Right ventricle myocardium superior (tissue), 1 donor: ENCODE measurements at regions of chr6 and their contacts with region 1.

Region 1: DNA sequence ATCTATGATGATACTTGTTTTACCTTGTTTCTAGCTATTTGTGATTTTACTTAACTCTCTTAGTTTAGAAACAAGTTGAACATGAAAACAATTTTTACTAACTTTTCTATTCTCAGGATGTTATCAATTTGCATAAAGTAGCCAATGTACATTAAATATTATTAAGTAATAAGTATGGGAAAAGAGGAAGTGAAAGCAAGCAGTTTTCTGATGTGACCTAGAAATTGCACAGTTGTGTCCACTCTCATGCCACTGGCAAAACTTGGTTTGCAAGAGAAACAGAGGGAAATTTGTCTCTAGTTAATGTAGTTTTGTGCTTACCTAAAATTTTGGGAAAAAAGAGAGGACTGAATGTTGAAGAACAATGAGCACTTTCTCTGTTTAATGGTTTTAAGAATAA is 19.2 kb upstream of the TSPYL1 start:
- DNase-seq: no peak
- ATAC-seq: no peak

Region 2: DNA sequence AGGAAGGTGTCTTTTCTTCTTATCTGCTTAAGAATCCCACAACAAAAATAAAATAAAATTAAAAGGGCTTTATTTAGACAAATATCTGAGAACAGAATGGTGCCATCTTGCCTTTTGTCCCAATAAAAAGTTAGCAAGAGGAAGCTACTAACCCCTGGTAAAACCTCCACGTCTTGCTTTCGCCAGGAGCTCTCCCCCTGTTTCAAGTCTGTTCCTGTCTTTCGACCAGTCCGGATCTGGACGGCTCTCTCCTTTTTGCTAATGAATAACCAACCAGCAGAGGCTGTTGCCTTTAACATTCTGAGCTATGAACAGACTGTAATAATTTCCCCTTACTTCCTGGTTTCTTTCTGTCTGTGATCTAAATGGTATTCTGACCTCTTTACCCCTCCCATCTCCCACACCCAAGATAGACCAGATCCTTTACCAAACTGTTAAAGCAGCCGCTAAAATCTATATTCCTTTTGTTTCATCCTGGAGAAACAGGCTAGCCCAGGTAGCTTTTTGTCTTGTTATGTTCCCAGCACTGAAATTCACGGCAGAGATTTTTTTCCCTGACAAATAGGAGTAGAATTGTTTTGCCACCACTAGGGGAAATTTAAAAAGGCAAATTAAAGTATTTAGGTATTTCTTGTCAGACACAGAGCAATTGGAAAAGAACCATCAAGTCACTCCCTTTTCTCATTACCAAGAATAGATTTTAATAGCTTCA is 238.2 kb before region 1 on chr6 and contains the start of gene FRK:
- intact Hi-C with region 1: no loop called
- DNase-seq: no peak
- ATAC-seq: peak; percentile 85
- total RNA-seq, gene FRK: 7.5 TPM

Region 3: DNA sequence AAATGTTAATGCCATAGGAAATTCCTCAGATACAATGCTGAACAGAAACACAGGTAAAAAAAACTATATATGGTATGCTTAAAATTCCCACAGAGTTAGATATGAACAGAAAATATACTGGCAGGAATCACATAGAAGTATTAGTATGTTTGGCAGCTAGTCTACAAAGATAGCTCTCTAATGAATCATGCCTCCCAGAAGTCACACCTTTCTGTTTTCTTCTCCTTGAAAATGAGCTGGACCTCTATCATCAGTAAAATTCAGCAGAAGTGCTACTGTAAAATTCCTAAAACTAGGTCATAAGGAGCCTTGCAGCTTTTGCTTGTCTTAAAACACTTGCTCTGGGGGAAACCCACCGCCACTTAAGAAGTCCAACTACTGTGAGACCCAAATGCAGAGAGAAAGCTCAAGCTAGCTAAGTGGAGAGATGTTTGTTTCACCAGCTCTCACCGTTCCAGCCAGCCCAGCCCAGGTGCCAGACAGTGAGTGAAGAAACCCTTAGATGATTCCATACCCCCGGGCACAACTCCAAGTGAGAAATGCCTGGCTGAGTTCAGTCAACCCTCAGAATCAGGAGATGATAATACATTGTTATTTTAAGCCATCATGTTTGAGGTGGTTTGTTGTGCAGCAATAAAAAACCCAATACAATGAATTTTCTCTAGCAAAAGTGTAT is 88.1 kb before region 1 on chr6:
- intact Hi-C with region 1: no loop called
- DNase-seq: peak; percentile 71
- ATAC-seq: peak; percentile 92

Region 4: DNA sequence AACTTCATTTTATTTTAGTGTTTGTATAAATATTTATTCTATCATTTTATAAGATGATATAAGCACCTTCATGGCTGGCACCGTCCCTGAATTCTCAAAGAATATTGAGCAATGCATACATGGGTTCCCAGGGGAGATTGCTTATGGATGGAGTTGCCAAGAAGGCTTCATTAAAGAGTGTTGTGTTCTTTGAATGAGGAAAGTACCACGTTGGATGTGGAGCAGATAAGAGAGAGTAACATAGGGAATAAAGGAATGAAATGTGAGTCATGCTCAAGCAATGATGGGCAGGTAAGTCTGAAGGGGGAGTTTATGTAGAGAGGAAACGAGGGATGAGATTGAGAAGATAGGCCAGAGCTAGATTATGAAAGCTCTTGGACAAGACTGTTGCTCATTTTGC is 82.0 kb after region 1 on chr6:
- intact Hi-C with region 1: no loop called
- DNase-seq: no peak
- ATAC-seq: no peak

Region 5: DNA sequence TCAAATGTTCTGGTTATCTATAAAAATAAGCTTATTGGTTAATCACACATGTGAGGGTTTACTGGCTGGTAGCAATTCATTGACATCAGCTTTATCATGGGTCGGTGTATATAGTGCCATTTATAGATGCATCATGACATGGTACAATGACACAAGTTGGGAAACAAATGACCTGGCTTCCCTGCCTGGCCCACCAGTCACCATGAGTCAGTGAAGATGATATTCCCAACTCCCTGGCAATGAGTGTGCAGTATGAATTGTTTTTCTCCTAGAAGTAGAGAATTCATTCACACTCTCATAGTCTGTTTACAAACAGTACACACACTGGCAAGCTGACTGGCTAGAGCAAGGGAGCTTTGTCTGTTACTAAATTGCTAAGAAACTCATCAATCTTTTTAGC is 125.0 kb after region 1 on chr6:
- intact Hi-C with region 1: loop called (anchors 10 kb)
- DNase-seq: no peak
- ATAC-seq: no peak

Region 6: GRCh38 chr6:116444092-116444491 is 145.1 kb after region 1 on chr6:
- intact Hi-C with region 1: loop called (anchors 10 kb)
- DNase-seq: no peak
- ATAC-seq: peak; percentile 78

Region 7: GRCh38 chr6:117025310-117025709 is 726.3 kb after region 1 on chr6:
- intact Hi-C with region 1: no loop called
- DNase-seq: no peak
- ATAC-seq: no peak